A549 (cell line): ENCODE measurements at regions of chr12 and their contacts with region 1.

Region 1: GRCh38 chr12:614411-614970 is 48.8 kb downstream of the NINJ2 start:
- DNase-seq: peak in 1 of 2 experiments; percentile 76
- ATAC-seq: peak; percentile 65 to 83; a peak in 5 of 6 replicates
- H3K4me3 ChIP-seq: no peak overlapping the region
- H3K27ac ChIP-seq: peak overlapping the region; percentile 71 to 75
- H3K4me1 ChIP-seq: peaks cover 30% of the 10 kb centered on the region
- CTCF ChIP-seq: peak; percentile 54
- EP300 ChIP-seq: no peak
- POLR2A ChIP-seq: no peak
- RAD21 ChIP-seq: peak; percentile 84 to 91

Region 2: DNA sequence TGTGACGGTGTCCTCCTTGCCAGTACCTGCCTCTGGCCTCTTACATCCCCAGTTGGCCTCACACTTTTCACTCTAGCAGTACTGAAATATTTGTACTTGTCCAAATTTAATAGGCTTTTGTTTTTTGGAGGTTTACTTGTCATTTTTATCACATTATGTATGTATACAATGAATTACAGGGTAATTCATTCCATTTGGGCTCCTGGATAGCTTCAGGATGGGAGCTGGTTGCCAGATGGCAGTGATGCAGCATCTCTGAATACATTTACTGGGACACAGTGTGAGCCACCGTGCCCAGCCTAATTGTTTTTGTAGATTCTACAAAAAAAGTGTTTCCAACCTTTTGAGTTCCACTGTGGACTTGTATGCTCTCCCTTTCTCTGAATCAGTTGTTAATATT is 199.6 kb before region 1 on chr12:
- CTCF ChIA-PET with region 1: no interaction called
- POLR2A ChIA-PET with region 1: no interaction called
- DNase-seq: no peak
- ATAC-seq: no peak
- H3K4me3 ChIP-seq: no peak overlapping the region
- H3K27ac ChIP-seq: no peak overlapping the region
- H3K4me1 ChIP-seq: no peaks in the 10 kb centered on the region
- CTCF ChIP-seq: no peak
- EP300 ChIP-seq: no peak
- POLR2A ChIP-seq: no peak
- RAD21 ChIP-seq: no peak

Region 3: GRCh38 chr12:591167-592023 is 23.1 kb before region 1 on chr12:
- CTCF ChIA-PET with region 1: interaction called, 18 read pairs
- POLR2A ChIA-PET with region 1: interaction called, 9 read pairs
- DNase-seq: no peak
- ATAC-seq: peak; percentile 68 to 83; a peak in 5 of 6 replicates
- H3K4me3 ChIP-seq: no peak overlapping the region
- H3K27ac ChIP-seq: no peak overlapping the region
- H3K4me1 ChIP-seq: no peaks in the 10 kb centered on the region
- CTCF ChIP-seq: no peak
- EP300 ChIP-seq: no peak
- POLR2A ChIP-seq: no peak
- RAD21 ChIP-seq: no peak

Region 4: GRCh38 chr12:597926-598568 is 16.4 kb before region 1 on chr12:
- CTCF ChIA-PET with region 1: interaction called, 18 read pairs
- POLR2A ChIA-PET with region 1: no interaction called
- DNase-seq: no peak
- ATAC-seq: peak in 1 of 2 experiments; percentile 53; a peak in 3 of 6 replicates
- H3K4me3 ChIP-seq: no peak overlapping the region
- H3K27ac ChIP-seq: peak overlapping the region in 1 of 2 experiments; percentile 8; a peak in 2 of 6 replicates
- H3K4me1 ChIP-seq: 0 out of 3 replicates have a peak, but pooled peaks cover 3% of the 10 kb centered on the region
- CTCF ChIP-seq: no peak
- EP300 ChIP-seq: no peak
- POLR2A ChIP-seq: no peak
- RAD21 ChIP-seq: no peak

Region 5: DNA sequence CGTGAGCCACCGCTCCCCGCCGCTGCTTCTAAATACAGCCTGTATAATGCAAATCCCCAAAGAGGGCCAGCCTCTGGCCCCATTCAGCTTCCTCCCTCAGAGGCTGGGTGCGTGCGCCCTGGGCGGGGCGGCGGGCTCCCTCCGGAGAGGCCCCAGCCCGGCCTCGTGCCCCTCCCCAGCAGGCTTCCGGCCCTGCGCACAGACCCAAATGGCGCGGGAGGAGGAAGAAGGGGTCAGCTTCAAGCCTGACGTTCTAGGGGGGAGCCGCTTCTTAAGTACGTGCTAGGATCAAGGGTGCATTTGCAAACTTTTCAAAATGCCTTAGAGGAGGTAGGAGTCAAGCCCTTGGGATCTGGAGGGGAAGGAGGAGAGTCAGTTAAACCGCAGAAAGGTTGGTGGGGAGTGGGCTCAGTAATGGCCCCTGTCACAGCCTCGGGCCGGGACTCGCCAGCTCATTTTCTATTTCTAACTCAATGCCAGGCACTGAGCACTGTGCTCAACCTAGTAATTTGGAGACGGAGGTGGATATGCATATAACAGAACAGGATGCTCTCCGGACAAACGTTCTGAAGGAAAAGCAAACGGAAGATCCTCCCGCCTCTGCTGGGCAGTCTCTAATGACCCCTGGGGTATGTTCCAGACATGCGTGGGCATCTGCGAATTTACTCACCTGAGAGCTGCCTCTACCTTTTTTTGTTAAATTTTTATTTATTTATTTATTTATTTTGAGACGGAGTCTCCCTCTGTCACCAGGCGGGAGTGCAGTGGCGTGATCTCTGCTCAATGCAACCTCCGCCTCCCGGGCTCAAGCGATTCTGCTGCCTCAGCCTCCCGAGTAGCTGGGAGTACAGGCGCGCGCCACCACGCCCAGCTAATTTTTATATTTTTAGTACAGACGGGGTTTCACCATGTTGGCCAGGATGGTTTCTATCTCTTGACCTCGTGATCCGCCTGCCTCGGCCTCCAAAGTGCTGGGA is 16.5 kb after region 1 on chr12:
- CTCF ChIA-PET with region 1: interaction called, 31 read pairs
- POLR2A ChIA-PET with region 1: interaction called, 5 read pairs
- DNase-seq: no peak
- ATAC-seq: no peak
- H3K4me3 ChIP-seq: no peak overlapping the region
- H3K27ac ChIP-seq: peak overlapping the region; percentile 96 to 97
- H3K4me1 ChIP-seq: peaks cover 58% of the 10 kb centered on the region
- CTCF ChIP-seq: no peak
- EP300 ChIP-seq: no peak
- POLR2A ChIP-seq: no peak
- RAD21 ChIP-seq: no peak

Region 6: GRCh38 chr12:642633-643474 is 28.4 kb after region 1 on chr12:
- CTCF ChIA-PET with region 1: interaction called, 15 read pairs
- POLR2A ChIA-PET with region 1: interaction called, 3 read pairs
- DNase-seq: peak; percentile 82 to 83
- ATAC-seq: peak; percentile 73 to 88
- H3K4me3 ChIP-seq: peak overlapping the region; percentile 50
- H3K27ac ChIP-seq: peak overlapping the region; percentile 98
- H3K4me1 ChIP-seq: peaks cover 49% of the 10 kb centered on the region
- CTCF ChIP-seq: peak; percentile 24; the same call in 2 of the 3 replicates
- EP300 ChIP-seq: no peak; a peak in 1 of 5 replicates
- POLR2A ChIP-seq: peak; percentile 24; the same call in 1 of the 2 replicates
- RAD21 ChIP-seq: peak in 1 of 2 experiments; percentile 13; a peak in 2 of 5 replicates

Region 7: GRCh38 chr12:818733-819132 is 204.2 kb after region 1 on chr12:
- CTCF ChIA-PET with region 1: interaction called, 31 read pairs
- POLR2A ChIA-PET with region 1: no interaction called
- DNase-seq: peak in 1 of 2 experiments; percentile 19
- ATAC-seq: no peak; a peak in 1 of 6 replicates
- H3K4me3 ChIP-seq: no peak overlapping the region
- H3K27ac ChIP-seq: peak overlapping the region in 1 of 2 experiments; percentile 39; a peak in 2 of 6 replicates
- H3K4me1 ChIP-seq: peaks cover 32% of the 10 kb centered on the region
- CTCF ChIP-seq: no peak
- EP300 ChIP-seq: no peak
- POLR2A ChIP-seq: no peak
- RAD21 ChIP-seq: no peak